CD14-positive monocyte (primary cell): ENCODE measurements at regions of chr17 and their contacts with region 1.

Region 1: GRCh38 chr17:2949469-2950044 is 113.8 kb downstream of the OR1D5 start:
- DNase-seq: no peak
- H3K4me3 ChIP-seq: no peak overlapping the region
- H3K4me3 Mint-ChIP-seq: no peak overlapping the region
- H3K27ac ChIP-seq: no peak overlapping the region
- H3K27ac Mint-ChIP-seq: peak overlapping the region in 1 of 7 donors; percentile 57
- H3K4me1 ChIP-seq: peaks cover 4 to 11% of the 10 kb centered on the region in 2 donors
- H3K4me1 Mint-ChIP-seq: peaks cover 11% of the 10 kb centered on the region
- H3K27me3 ChIP-seq: no peaks in the 10 kb centered on the region
- H3K27me3 Mint-ChIP-seq: peaks cover 0 to 5% (median 0%) of the 10 kb centered on the region in 3 donors
- CTCF ChIP-seq: no peak

Region 2: DNA sequence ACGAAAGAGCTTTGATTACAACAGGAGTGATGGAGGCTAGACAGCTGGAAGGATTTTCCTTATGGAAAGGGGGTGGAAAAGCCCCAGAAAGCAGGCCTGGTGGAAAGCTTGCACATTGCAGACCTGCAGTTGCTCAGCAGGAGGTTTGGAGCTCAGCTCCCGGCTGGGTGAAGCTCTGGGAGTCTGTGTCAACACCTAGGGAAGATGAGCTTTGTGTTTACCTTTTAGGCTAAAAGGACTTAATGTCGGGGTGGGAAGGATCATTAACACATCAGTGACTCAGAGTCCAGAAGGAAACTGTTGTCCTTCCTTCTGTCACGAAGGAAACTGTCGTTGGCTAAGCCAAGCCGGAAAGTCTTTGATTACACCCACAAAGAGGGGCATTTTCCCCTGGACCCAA is 105.1 kb before region 1 on chr17:
- intact Hi-C with region 1: loop called in 1 of 2 experiments (anchors 10 kb)
- DNase-seq: no peak
- H3K4me3 ChIP-seq: no peak overlapping the region
- H3K4me3 Mint-ChIP-seq: no peak overlapping the region
- H3K27ac ChIP-seq: no peak overlapping the region
- H3K27ac Mint-ChIP-seq: peak overlapping the region in 3 of 7 donors; percentile 31 to 57 (median 57)
- H3K4me1 ChIP-seq: peaks cover 27 to 28% of the 10 kb centered on the region in 2 donors
- H3K4me1 Mint-ChIP-seq: peaks cover 40% of the 10 kb centered on the region
- H3K27me3 ChIP-seq: no peaks in the 10 kb centered on the region
- H3K27me3 Mint-ChIP-seq: peaks cover 0 to 8% (median 0%) of the 10 kb centered on the region in 3 donors
- CTCF ChIP-seq: no peak

Region 3: DNA sequence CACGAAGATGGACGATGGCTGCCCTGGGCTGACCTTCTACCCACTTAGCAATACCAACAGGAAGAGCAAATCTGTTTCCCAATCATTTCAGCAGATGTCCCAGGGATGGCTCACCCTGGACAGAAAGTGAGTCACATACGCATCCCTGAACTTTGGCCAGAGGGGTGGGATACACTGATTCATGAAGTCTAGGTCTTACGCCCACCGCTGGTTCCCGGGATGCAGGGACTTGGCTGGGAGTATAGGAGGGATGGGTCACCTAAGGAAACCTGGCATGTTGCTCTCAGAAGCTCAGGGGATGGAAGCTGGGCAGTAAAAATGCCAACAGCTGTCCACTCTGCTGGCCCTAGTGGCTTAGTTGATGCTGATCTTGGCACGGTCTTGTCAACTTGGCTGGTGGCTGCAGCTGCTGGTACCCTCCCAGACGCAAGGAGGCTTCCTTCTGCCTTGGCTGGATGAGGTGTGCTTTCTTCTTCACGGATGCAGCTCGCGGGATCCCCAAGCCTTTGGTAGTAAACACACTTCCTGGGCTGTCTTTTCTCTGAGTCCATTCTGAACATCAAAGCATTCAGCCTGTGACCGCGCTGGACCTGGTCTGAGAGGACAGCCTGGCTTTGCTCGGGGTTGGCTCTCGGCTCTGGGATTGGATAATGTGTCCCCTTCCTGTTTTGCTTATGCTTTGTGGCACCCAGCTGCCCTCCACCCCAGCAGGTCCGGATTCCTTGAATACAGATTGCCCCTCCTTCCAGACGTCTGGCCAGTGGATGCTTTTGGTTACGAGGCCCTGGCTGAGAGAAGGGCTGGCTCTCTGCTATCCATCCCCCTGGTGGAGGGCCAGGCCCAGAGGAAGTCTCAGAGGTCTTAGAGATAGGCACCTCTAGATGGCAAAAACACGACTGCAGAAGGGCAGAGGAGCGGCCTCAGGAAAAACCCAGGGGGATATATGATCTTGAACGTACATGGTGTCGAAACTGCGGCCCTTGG is 81.8 kb before region 1 on chr17:
- intact Hi-C with region 1: no loop called
- DNase-seq: no peak
- H3K4me3 ChIP-seq: no peak overlapping the region
- H3K4me3 Mint-ChIP-seq: no peak overlapping the region
- H3K27ac ChIP-seq: no peak overlapping the region
- H3K27ac Mint-ChIP-seq: peak overlapping the region in 4 of 7 donors; percentile 13 to 63 (median 43)
- H3K4me1 ChIP-seq: no peaks in the 10 kb centered on the region
- H3K4me1 Mint-ChIP-seq: peaks cover 6% of the 10 kb centered on the region
- H3K27me3 ChIP-seq: no peaks in the 10 kb centered on the region
- H3K27me3 Mint-ChIP-seq: no peaks in the 10 kb centered on the region
- CTCF ChIP-seq: no peak